Ascending aorta (tissue), 2 donors: ENCODE measurements at regions of chrX and their contacts with region 1.

Region 1: DNA sequence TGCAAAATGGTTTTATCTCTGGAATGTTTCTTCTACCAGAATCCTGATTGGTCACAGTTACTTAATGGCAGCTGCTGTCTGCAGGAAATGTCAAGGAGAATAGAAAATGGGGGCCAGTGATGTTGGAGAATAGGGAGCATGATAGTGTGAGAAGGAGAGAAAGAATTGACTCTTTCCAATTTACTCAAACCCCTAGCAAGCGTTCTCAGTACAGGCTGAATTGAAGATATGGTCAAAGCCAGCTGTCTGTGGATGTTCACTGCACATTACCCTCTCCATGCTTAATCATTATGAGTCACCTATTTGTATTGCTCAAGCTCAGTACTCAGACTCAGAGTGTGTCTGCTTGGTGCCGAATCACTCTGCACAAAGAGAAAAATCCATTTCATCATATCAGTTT is 57.8 kb upstream of the FAM47B start:
- DNase-seq: no peak
- H3K4me3 ChIP-seq: no peak overlapping the region
- H3K27ac ChIP-seq: no peak overlapping the region
- H3K4me1 ChIP-seq: no peaks in the 10 kb centered on the region
- H3K27me3 ChIP-seq: no peaks in the 10 kb centered on the region
- CTCF ChIP-seq: no peak

Region 2: GRCh38 chrX:33211356-33212260 is 1673.2 kb before region 1 on chrX and contains the start of gene DMD:
- intact Hi-C with region 1: no loop called
- DNase-seq: peak; percentile 13 to 84
- H3K4me3 ChIP-seq: peak within 1 kb of the TSS; percentile 48 to 57
- H3K27ac ChIP-seq: peak within 1 kb of the TSS; percentile 31 to 68
- H3K4me1 ChIP-seq: no peaks in the 10 kb centered on the region
- H3K27me3 ChIP-seq: no peaks in the 10 kb centered on the region
- CTCF ChIP-seq: no peak
- total RNA-seq, gene DMD: 40.0 TPM

Region 3: DNA sequence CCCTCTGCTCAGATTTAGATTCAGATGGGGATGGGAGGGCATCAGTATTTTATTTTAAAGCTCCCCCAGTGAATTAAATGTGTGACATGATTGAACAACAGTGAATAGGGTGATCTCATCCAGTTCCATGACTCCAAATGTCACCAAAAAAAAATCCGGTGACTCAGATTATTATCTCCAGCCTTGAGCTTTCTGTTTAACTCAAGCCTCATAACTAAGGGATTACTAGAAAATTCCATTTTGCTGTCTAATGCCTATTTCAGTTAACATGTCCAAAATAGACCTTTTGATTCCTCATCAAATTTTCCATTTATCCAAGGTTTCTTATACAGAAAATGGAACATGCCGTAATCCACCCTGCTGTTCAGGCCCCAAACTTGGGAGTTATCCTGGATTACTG is 105.9 kb before region 1 on chrX:
- intact Hi-C with region 1: loop called (anchors 10 kb)
- DNase-seq: no peak
- H3K4me3 ChIP-seq: no peak overlapping the region
- H3K27ac ChIP-seq: peak overlapping the region; percentile 53 to 72
- H3K4me1 ChIP-seq: peaks cover 0 to 5% of the 10 kb centered on the region in 2 donors
- H3K27me3 ChIP-seq: no peaks in the 10 kb centered on the region
- CTCF ChIP-seq: no peak

Region 4: DNA sequence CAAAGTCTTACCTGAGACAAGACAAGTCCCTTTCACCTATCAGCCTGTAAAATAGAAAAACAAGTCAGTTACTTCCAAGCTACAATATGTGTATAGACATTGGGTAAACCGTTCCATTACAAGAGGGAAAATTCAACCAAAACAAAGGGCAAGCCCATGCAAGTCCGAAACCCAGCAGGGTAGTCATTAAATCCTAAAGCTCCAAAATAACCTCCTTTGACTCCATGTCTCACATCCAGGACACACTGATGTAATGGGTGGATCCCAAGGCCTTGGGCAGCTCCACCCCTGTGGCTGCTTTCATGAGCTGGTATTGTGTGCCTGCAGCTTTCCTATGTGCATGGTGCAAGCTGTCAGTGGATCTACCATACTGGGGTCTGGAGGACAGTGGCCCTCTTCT is 43.0 kb after region 1 on chrX:
- intact Hi-C with region 1: no loop called
- DNase-seq: no peak
- H3K4me3 ChIP-seq: no peak overlapping the region
- H3K27ac ChIP-seq: no peak overlapping the region
- H3K4me1 ChIP-seq: no peaks in the 10 kb centered on the region
- H3K27me3 ChIP-seq: no peaks in the 10 kb centered on the region
- CTCF ChIP-seq: no peak